Common myeloid progenitor, CD34-positive (primary cell): ENCODE measurements at regions of chr7 and their contacts with region 1.

Region 1: GRCh38 chr7:51162724-51163329 is 153.8 kb downstream of the COBL start:
- DNase-seq: peak; percentile 85 to 91 (median 87)
- H3K4me3 ChIP-seq: no peak overlapping the region
- H3K27ac ChIP-seq: no peak overlapping the region
- H3K4me1 ChIP-seq: peaks cover under 1 to 18% (median 12%) of the 10 kb centered on the region in 4 experiments
- H3K27me3 ChIP-seq: peaks cover 0 to 2% (median 0%) of the 10 kb centered on the region in 5 experiments

Region 2: DNA sequence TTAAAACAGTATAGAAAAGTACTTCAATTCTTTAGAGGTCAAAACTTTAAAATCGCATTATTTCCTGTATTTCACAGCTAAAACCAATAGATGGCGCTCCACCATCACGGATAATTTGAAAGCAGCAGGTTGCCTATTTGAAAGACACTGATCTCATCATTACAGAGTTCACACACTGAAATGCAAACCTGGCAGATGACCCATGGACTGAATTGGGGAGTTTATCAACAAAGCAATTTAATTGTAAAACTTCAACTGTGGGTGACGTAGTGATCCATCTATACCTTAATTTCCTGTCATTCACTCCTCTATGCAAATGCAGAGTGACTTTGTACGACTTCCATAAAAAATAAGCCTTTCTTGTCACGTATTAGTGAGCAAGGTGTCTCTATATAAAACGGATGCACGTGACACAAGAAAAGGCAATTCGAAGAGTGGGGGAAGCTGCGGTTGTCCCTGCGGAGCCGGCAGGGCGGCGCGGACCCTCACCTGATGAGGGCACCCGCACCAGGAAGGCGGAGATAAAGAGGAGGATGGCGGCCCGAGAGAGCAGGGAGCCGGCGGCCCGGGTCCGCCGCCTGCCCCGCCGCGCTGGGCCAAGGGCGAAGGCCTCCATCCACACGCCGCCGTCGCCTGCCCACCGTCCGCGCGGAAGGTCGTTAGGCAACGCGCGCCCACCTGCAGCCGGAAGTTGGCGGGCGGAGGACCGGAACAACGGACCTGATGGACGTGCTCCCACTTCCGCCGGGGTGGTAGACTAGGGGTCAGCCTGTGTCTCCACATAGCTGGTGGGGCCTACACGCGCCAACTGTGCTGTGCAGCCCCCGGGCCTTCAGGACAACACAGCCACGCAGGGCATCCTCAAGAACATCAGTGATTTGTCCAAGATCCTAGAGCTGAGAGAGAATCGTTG is 1070.0 kb before region 1 on chr7 and contains the start of gene ZPBP:
- CTCF ChIA-PET with region 1: interaction called, 16 read pairs
- POLR2A ChIA-PET with region 1: no interaction called
- DNase-seq: peak; percentile 68 to 84 (median 78)
- H3K4me3 ChIP-seq: peak within 1 kb of the TSS; percentile 11 to 86 (median 76)
- H3K27ac ChIP-seq: peak within 1 kb of the TSS in 1 of 2 experiments; percentile 22
- H3K4me1 ChIP-seq: peaks cover 3 to 9% (median 6%) of the 10 kb centered on the region in 4 experiments
- H3K27me3 ChIP-seq: no peaks in the 10 kb centered on the region

Region 3: DNA sequence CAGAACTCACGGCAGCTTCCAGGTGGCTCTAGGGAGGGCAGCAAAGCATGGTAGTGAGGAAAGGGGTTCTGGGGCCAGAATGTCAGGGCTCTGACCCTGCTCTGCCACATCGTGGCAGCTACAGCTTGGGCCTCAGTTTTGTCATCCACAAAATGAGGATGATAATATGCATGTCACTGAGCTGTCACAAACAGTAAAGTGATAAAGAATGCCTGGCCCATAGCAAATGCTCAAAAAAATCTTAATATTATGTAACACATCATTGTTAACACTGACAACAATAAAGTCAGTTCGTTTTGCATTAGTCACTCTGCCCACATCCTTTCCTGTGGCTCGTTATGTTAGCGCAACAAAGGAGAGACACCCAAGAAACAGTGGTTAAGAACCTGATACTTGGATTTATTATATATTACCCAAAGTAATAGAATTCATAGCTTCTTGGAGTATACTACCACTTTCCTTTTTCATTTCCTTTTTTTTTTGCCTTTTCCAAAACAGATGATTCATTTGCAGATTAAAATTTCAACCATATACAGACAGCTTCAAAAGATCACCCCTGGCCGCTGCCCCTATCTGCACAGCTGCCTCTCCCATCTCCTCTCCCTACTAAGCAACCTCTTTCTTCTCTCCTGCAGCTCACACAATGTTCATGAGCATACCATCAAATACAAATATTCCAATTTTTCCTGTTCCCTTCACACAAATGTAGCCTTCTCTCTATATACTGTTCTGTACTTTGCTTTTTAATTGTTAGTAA is 552.1 kb before region 1 on chr7:
- CTCF ChIA-PET with region 1: interaction called, 21 read pairs
- POLR2A ChIA-PET with region 1: no interaction called
- DNase-seq: peak; percentile 71 to 96 (median 93)
- H3K4me3 ChIP-seq: no peak overlapping the region
- H3K27ac ChIP-seq: peak overlapping the region in 1 of 2 experiments; percentile 29
- H3K4me1 ChIP-seq: peaks cover 5 to 30% (median 24%) of the 10 kb centered on the region in 4 experiments
- H3K27me3 ChIP-seq: no peaks in the 10 kb centered on the region

Region 4: GRCh38 chr7:51067757-51068156 is 95.1 kb before region 1 on chr7:
- CTCF ChIA-PET with region 1: interaction called, 10 read pairs
- POLR2A ChIA-PET with region 1: no interaction called
- DNase-seq: peak; percentile 71 to 86 (median 78)
- H3K4me3 ChIP-seq: no peak overlapping the region
- H3K27ac ChIP-seq: no peak overlapping the region
- H3K4me1 ChIP-seq: peaks cover 0 to 33% (median 11%) of the 10 kb centered on the region in 4 experiments
- H3K27me3 ChIP-seq: no peaks in the 10 kb centered on the region

Region 5: DNA sequence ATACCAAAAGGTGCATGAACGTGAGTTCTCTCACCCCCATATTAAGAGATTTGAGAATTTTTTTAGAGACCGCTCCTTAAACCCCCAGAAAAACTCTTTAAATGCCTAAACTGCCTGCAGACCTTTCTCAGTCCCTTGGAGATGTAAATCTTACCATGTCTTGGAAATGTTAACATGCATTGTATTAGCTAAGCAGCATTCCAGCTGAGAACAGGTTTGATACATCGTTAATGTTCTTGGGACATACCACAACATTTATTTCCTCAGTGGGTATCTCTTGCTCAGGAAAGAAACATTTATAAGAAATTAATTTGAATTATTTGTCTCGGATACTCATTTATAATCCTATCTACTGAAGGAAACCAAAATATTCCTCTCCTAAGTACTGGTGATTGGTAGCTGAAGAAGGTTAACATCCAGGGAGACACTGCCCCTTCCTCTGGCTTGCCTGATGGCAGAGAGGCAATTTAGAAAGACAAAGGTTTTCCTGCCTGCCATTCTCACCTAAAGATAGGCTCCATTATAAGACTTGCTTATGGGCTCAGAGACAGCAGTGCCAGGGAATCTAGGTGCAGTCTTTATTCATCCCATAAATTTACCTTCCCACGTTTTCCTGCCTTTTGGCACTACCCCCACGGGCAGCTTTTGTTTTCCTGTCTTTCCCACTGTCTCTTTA is 12.6 kb after region 1 on chr7:
- CTCF ChIA-PET with region 1: interaction called, 16 read pairs
- POLR2A ChIA-PET with region 1: no interaction called
- DNase-seq: no peak
- H3K4me3 ChIP-seq: no peak overlapping the region
- H3K27ac ChIP-seq: no peak overlapping the region
- H3K4me1 ChIP-seq: no peaks in the 10 kb centered on the region
- H3K27me3 ChIP-seq: peaks cover 0 to 14% (median 3%) of the 10 kb centered on the region in 5 experiments

Region 6: DNA sequence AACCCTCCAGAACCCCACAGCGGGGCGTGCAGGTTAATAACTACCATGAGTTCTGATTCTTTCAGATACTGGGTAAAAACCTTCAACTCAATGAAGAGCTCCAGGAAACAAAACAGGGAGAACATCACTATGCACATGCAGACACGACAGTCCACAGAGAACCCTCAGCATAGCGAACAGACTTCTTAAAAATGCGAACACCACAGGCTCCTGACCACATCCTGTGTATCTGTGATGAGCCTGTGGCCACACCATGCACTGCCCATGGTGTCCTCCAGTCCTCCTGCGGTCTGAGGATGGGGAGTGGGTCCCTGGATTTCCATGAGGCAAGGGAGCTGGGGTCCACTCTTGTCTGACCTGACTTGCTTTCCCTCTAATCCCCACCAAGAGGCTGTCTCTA is 46.6 kb after region 1 on chr7:
- CTCF ChIA-PET with region 1: no interaction called
- POLR2A ChIA-PET with region 1: no interaction called
- DNase-seq: no peak
- H3K4me3 ChIP-seq: no peak overlapping the region
- H3K27ac ChIP-seq: no peak overlapping the region
- H3K4me1 ChIP-seq: no peaks in the 10 kb centered on the region
- H3K27me3 ChIP-seq: no peaks in the 10 kb centered on the region